Activated CD4-positive, alpha-beta memory T cell treated with anti-CD3 and anti-CD28 coated beads, Interleukin-2, amount 10 ng/mL, durations not matched to agents 7 days and 5 days (primary cell): ENCODE measurements at regions of chr14 and their contacts with region 1.

Region 1: GRCh38 chr14:94129111-94129757 is at the start of gene IFI27L2:
- DNase-seq: peak; percentile 81
- H3K4me3 Mint-ChIP-seq: peak within 1 kb of the TSS; percentile 93
- H3K27ac Mint-ChIP-seq: peak within 1 kb of the TSS; percentile 82
- H3K4me1 Mint-ChIP-seq: peaks cover 25% of the 10 kb centered on the region
- H3K27me3 Mint-ChIP-seq: peaks cover 13% of the 10 kb centered on the region
- total RNA-seq, gene IFI27L2: 100 to 102 TPM

Region 2: DNA sequence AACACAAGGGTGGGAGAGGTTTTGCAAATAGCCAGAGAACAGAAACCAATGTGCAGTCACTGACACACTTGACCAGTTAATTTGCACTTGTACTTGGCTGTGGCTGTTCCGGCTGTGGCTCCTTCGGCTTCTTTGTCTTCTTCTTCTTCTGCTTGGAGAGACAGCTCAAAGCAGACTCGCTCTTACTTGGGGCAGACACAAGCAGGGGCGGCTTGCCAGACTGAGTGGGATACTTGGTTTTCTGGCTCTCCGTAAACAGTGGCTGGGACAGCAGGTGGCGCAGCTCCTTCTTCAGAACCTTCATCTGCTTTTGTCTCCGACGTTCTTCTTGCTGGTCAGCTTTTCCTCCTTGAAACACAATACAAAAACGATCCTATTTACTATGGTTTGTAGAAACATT is 78.1 kb before region 1 on chr14:
- CTCF ChIA-PET with region 1: interaction called, 10 read pairs
- POLR2A ChIA-PET with region 1: interaction called, 8 read pairs
- DNase-seq: peak; percentile 16
- H3K4me3 Mint-ChIP-seq: no peak overlapping the region
- H3K27ac Mint-ChIP-seq: peak overlapping the region; percentile 5
- H3K4me1 Mint-ChIP-seq: peaks cover 39% of the 10 kb centered on the region
- H3K27me3 Mint-ChIP-seq: no peaks in the 10 kb centered on the region

Region 3: DNA sequence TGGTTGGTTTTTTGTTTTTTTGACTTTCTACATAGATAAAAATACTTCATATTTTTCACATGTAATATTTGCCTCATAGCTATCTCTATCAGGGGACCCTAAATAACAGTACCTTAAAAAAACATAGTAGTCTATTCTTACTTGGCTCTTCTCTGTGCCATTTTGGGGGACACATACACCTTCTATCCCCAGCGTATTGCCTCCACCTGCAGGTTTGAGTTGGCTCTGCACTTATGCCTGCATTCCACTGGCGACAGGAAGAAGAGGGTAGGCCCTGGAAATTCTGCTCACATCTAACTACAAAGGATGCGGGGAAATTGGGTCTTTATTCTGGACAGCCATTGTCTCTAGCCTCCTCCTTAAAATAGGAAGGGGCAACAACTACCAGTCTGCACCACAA is 14.0 kb after region 1 on chr14:
- CTCF ChIA-PET with region 1: interaction called, 16 read pairs
- POLR2A ChIA-PET with region 1: no interaction called
- DNase-seq: no peak
- H3K4me3 Mint-ChIP-seq: no peak overlapping the region
- H3K27ac Mint-ChIP-seq: no peak overlapping the region
- H3K4me1 Mint-ChIP-seq: peaks cover 26% of the 10 kb centered on the region
- H3K27me3 Mint-ChIP-seq: peaks cover 4% of the 10 kb centered on the region

Region 4: DNA sequence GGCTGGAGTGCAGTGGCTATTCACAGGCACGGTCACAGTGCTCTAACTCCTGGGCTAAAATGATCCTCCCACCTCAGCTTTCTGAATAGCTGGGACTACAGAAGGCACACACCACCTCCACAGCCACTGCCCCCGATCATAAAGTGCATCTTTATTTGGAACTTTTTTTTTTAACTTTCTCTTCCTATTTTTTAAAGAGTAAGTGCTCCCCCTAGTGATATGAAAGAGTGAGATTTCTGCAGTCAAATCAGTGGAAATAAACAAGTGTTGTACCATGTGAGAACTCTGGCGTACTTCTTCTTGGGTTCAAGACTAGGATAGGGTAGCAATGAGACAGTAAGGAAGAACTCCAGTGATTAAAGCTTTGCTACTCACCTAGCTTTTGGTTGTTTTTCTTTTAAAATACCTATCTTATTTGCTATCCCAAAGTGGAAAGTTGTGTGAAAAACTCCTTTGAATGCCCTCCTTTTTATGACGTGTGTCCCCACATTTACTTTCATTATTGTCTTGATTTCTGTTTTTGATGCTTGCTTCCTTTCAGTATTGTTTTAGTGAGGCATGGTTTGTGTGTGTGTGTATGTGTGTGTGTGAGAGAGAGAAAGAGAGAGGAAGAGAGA is 51.5 kb after region 1 on chr14:
- CTCF ChIA-PET with region 1: interaction called, 68 read pairs
- POLR2A ChIA-PET with region 1: interaction called, 23 read pairs
- DNase-seq: no peak
- H3K4me3 Mint-ChIP-seq: peak overlapping the region; percentile 59
- H3K27ac Mint-ChIP-seq: peak overlapping the region; percentile 47
- H3K4me1 Mint-ChIP-seq: peaks cover 24% of the 10 kb centered on the region
- H3K27me3 Mint-ChIP-seq: peaks cover 10% of the 10 kb centered on the region

Region 5: GRCh38 chr14:94217116-94217515 is 87.9 kb after region 1 on chr14:
- CTCF ChIA-PET with region 1: no interaction called
- POLR2A ChIA-PET with region 1: no interaction called
- DNase-seq: no peak
- H3K4me3 Mint-ChIP-seq: no peak overlapping the region
- H3K27ac Mint-ChIP-seq: no peak overlapping the region
- H3K4me1 Mint-ChIP-seq: no peaks in the 10 kb centered on the region
- H3K27me3 Mint-ChIP-seq: no peaks in the 10 kb centered on the region